MCF 10A (cell line): ENCODE measurements at regions of chr2 and their contacts with region 1.

Region 1: GRCh38 chr2:199911052-199911876 is at the start of gene C2orf69:
- DNase-seq: peak; percentile 98
- H3K4me3 Mint-ChIP-seq: peak within 1 kb of the TSS; percentile 96
- H3K27ac Mint-ChIP-seq: peak within 1 kb of the TSS; percentile 86
- H3K4me1 Mint-ChIP-seq: peaks cover 25% of the 10 kb centered on the region
- H3K27me3 Mint-ChIP-seq: no peaks in the 10 kb centered on the region
- CTCF ChIP-seq: no peak
- total RNA-seq, gene C2orf69: 8.3 and 8.6 TPM in 2 replicates

Region 2: GRCh38 chr2:199868431-199869226 is 42.6 kb before region 1 on chr2:
- CTCF ChIA-PET with region 1: no interaction called
- POLR2A ChIA-PET with region 1: no interaction called
- intact Hi-C with region 1: no loop called
- DNase-seq: no peak
- H3K4me3 Mint-ChIP-seq: no peak overlapping the region
- H3K27ac Mint-ChIP-seq: no peak overlapping the region
- H3K4me1 Mint-ChIP-seq: no peaks in the 10 kb centered on the region
- H3K27me3 Mint-ChIP-seq: peaks cover 70% of the 10 kb centered on the region
- CTCF ChIP-seq: no peak

Region 3: GRCh38 chr2:199883474-199884212 is 27.6 kb before region 1 on chr2:
- CTCF ChIA-PET with region 1: no interaction called
- POLR2A ChIA-PET with region 1: no interaction called
- intact Hi-C with region 1: no loop called
- DNase-seq: no peak
- H3K4me3 Mint-ChIP-seq: no peak overlapping the region
- H3K27ac Mint-ChIP-seq: no peak overlapping the region
- H3K4me1 Mint-ChIP-seq: no peaks in the 10 kb centered on the region
- H3K27me3 Mint-ChIP-seq: peaks cover under 1% of the 10 kb centered on the region
- CTCF ChIP-seq: no peak

Region 4: GRCh38 chr2:199922856-199923255 is 11.6 kb after region 1 on chr2:
- CTCF ChIA-PET with region 1: no interaction called
- POLR2A ChIA-PET with region 1: interaction called, 11 read pairs
- intact Hi-C with region 1: no loop called
- DNase-seq: no peak
- H3K4me3 Mint-ChIP-seq: no peak overlapping the region
- H3K27ac Mint-ChIP-seq: peak overlapping the region; percentile 8
- H3K4me1 Mint-ChIP-seq: peaks cover 14% of the 10 kb centered on the region
- H3K27me3 Mint-ChIP-seq: no peaks in the 10 kb centered on the region
- CTCF ChIP-seq: no peak

Region 5: GRCh38 chr2:199955339-199956261 is 44.3 kb after region 1 on chr2 and contains the starts of genes MAIP1 and TYW5:
- CTCF ChIA-PET with region 1: interaction called, 3 read pairs
- POLR2A ChIA-PET with region 1: interaction called, 9 read pairs
- intact Hi-C with region 1: loop called (anchors 2 kb)
- DNase-seq: peak; percentile 87
- H3K4me3 Mint-ChIP-seq: peak within 1 kb of the TSS; percentile 99
- H3K27ac Mint-ChIP-seq: peak within 1 kb of the TSS; percentile 93
- H3K4me1 Mint-ChIP-seq: peaks cover 11% of the 10 kb centered on the region
- H3K27me3 Mint-ChIP-seq: no peaks in the 10 kb centered on the region
- CTCF ChIP-seq: no peak
- total RNA-seq, gene MAIP1: 17.7 and 24.1 TPM in 2 replicates
- total RNA-seq, gene TYW5: 9.7 and 11.1 TPM in 2 replicates